Mammary epithelial cell (primary cell): ENCODE measurements at regions of chr12 and their contacts with region 1.

Region 1: DNA sequence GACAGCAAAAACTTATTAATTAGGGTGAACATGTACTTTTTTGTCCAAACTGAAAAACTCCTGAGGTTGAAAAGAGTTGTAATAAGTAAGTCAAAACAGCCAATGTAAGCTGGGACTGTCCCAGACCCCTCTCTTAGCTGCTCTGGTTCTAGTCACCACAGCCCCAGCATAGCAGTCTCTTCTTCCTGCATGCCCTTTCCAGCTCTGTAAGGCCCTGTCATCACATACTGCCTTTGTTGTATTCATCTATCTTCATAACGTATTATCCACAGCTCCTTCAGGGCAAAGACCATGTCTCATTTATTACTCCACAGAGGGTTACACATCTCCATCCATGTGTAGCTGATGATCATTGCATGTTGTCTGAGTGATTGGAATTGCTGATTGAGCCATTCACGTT is 56.5 kb downstream of the UTP20 start:
- DNase-seq: no peak
- H3K4me3 ChIP-seq: no peak overlapping the region
- H3K27ac ChIP-seq: no peak overlapping the region
- H3K4me1 ChIP-seq: no peaks in the 10 kb centered on the region
- H3K27me3 ChIP-seq: no peaks in the 10 kb centered on the region
- CTCF ChIP-seq: no peak

Region 2: DNA sequence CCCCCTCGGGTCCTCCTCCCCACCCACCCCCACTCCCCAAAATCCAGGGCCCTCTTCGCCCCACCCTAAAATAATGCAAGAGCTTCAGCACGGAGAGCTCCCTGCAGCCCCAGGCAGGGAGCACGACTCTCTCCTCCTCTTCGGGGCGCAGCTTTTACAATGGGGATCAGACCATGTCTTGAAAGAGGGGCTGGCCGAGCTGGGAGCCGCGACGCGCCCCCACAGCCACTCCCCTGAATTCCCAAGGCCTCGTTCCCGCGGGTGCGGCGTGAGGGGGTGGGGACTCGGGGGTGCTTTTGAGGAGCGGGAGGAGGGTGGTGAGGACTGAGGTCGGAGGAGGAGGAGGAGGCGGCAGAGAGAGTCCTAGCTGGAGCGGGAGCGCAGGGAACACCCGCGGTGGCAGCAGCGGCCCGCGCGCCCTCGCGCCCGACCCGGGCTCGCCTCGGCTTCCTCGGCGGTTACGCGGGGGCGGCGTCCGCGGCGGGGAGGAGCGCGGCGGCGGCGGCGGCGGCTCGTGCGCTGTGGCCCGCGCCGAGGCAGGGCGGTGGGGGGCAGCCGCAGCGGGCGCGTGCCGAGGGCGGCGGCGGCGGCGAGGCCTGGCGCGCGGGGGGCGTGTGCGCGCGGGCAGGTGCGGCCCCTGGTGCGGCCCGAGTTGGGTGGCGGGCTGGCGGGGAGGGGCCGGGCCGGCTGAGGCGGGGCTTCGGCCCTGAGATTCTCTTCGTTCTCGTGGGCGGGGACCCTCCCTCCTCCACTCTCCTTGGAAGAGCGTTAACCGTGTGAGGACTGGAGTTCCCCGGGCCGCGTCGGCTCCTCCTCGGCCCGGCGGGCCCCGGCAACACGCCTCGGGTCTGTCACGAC is 1351.9 kb before region 1 on chr12 and contains the start of gene ANKS1B:
- CTCF ChIA-PET with region 1: no interaction called
- dilution Hi-C with region 1: no loop called
- in situ Hi-C with region 1: no loop called
- intact Hi-C with region 1: loop called (anchors 10 kb)
- DNase-seq: peak; percentile 19
- H3K4me3 ChIP-seq: peak within 1 kb of the TSS; percentile 38 to 58 (median 46)
- H3K27ac ChIP-seq: no peak within 1 kb of the TSS
- H3K4me1 ChIP-seq: peaks cover 8% of the 10 kb centered on the region
- H3K27me3 ChIP-seq: peaks cover 8% of the 10 kb centered on the region
- CTCF ChIP-seq: no peak
- total RNA-seq, gene ANKS1B: 1.3 TPM in 1 of 2 donors, not detected in the other

Region 3: DNA sequence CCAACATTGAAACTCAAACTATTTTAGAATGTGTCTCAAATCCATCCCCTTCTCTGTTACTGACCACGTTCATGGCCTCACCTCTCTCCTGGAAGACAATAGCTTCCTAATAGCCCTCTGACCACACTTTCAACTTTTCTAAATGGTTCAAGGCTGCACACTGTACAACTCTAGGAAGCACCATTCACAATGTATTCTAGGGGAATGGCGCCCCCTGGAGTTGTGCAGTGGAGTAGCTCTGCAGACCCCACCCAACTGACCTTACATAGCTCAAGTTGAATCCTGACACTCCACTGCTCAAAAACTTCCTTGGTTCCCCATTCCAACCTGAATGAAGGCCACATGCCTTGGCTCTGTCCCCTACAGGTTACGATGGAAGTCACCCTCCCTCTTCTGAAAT is 685.3 kb before region 1 on chr12:
- CTCF ChIA-PET with region 1: no interaction called
- dilution Hi-C with region 1: no loop called
- in situ Hi-C with region 1: no loop called
- intact Hi-C with region 1: no loop called
- DNase-seq: no peak
- H3K4me3 ChIP-seq: no peak overlapping the region
- H3K27ac ChIP-seq: no peak overlapping the region
- H3K4me1 ChIP-seq: no peaks in the 10 kb centered on the region
- H3K27me3 ChIP-seq: no peaks in the 10 kb centered on the region
- CTCF ChIP-seq: peak in 1 of 2 donors; percentile 6